Natural killer cell (primary cell): ENCODE measurements at regions of chr2 and their contacts with region 1.

Region 1: GRCh38 chr2:44167940-44168680 is 565 bp upstream of the PPM1B start:
- DNase-seq: peak; percentile 90 to 99
- ATAC-seq: peak; percentile 76 to 92 (median 79)
- H3K4me3 ChIP-seq: peak overlapping the region; percentile 68
- H3K4me3 Mint-ChIP-seq: peak overlapping the region; percentile 97
- H3K27ac ChIP-seq: peak overlapping the region; percentile 93
- H3K27ac Mint-ChIP-seq: peak overlapping the region; percentile 90 to 96
- H3K4me1 ChIP-seq: peaks cover 12% of the 10 kb centered on the region
- H3K4me1 Mint-ChIP-seq: peaks cover 34 to 42% of the 10 kb centered on the region in 2 donors
- H3K27me3 ChIP-seq: no peaks in the 10 kb centered on the region
- H3K27me3 Mint-ChIP-seq: no peaks in the 10 kb centered on the region
- CTCF ChIP-seq: no peak

Region 2: GRCh38 chr2:42810121-42810970 is 1357.8 kb before region 1 on chr2:
- intact Hi-C with region 1: loop called (anchors 5 kb)
- DNase-seq: peak; percentile 98 to 99
- ATAC-seq: peak; percentile 78 to 92 (median 83)
- H3K4me3 ChIP-seq: peak overlapping the region; percentile 80
- H3K4me3 Mint-ChIP-seq: peak overlapping the region; percentile 96
- H3K27ac ChIP-seq: peak overlapping the region; percentile 95
- H3K27ac Mint-ChIP-seq: peak overlapping the region; percentile 98 to 99
- H3K4me1 ChIP-seq: peaks cover 21% of the 10 kb centered on the region
- H3K4me1 Mint-ChIP-seq: peaks cover 28 to 30% of the 10 kb centered on the region in 2 donors
- H3K27me3 ChIP-seq: no peaks in the 10 kb centered on the region
- H3K27me3 Mint-ChIP-seq: peaks cover 3 to 5% of the 10 kb centered on the region in 2 donors
- CTCF ChIP-seq: peak; percentile 7

Region 3: DNA sequence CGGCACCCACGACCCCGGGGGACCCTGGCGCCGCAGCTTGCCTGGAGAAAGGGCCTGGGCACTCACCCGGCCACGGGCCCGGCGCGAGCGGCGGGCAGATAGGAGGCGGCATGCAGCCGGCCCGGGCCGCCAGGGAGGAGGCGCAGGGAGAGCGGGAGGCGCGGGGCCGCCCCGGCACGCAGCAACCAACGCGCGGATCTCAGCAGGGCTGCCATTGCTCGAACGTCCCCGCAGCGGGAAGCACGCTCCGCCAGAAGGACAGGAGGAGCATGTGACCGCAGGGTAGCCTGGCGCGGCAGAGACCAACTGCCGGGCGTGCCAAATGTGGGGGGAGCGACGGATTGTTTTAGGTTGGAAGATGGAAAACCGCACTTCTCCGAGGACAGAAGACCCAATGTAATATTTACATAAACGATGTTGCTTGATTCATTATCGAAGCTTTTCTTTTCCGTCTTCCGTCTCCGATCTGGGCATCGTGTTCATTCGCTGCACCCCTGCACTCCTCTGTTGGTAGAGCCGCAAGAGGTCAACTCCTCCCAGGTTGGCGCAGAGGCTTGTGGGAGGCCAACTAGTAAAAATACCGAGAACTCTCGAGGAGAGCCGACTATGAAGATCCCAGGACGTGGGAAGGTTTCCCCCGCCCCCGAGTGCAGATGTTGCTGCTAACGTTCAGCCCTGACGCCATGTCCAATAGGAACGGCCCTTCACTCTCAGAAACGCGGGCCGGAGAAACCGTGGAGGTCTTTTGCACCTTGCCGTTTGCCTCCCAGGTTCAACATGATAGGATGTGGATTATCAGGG is 172.2 kb before region 1 on chr2 and contains the start of gene LRPPRC:
- intact Hi-C with region 1: loop called (anchors 1 kb)
- DNase-seq: peak; percentile 78 to 96
- ATAC-seq: peak; percentile 94 to 98 (median 95)
- H3K4me3 ChIP-seq: peak within 1 kb of the TSS; percentile 94
- H3K4me3 Mint-ChIP-seq: peak within 1 kb of the TSS; percentile 91
- H3K27ac ChIP-seq: peak within 1 kb of the TSS; percentile 89
- H3K27ac Mint-ChIP-seq: peak within 1 kb of the TSS; percentile 93 to 97
- H3K4me1 ChIP-seq: peaks cover 21% of the 10 kb centered on the region
- H3K4me1 Mint-ChIP-seq: peaks cover 44 to 52% of the 10 kb centered on the region in 2 donors
- H3K27me3 ChIP-seq: no peaks in the 10 kb centered on the region
- H3K27me3 Mint-ChIP-seq: peaks cover 0 to 3% of the 10 kb centered on the region in 2 donors
- CTCF ChIP-seq: no peak
- total RNA-seq, gene LRPPRC: 43.5 to 53.8 (median 48.4) TPM

Region 4: GRCh38 chr2:44184106-44184505 is 16.0 kb after region 1 on chr2:
- intact Hi-C with region 1: loop called (anchors 1 kb)
- DNase-seq: peak in 1 of 2 donors; percentile 62
- ATAC-seq: peak; percentile 95 to 97 (median 96)
- H3K4me3 ChIP-seq: no peak overlapping the region
- H3K4me3 Mint-ChIP-seq: peak overlapping the region; percentile 66
- H3K27ac ChIP-seq: peak overlapping the region; percentile 82
- H3K27ac Mint-ChIP-seq: peak overlapping the region; percentile 90 to 94
- H3K4me1 ChIP-seq: peaks cover 22% of the 10 kb centered on the region
- H3K4me1 Mint-ChIP-seq: peaks cover 77 to 84% of the 10 kb centered on the region in 2 donors
- H3K27me3 ChIP-seq: no peaks in the 10 kb centered on the region
- H3K27me3 Mint-ChIP-seq: no peaks in the 10 kb centered on the region
- CTCF ChIP-seq: no peak

Region 5: DNA sequence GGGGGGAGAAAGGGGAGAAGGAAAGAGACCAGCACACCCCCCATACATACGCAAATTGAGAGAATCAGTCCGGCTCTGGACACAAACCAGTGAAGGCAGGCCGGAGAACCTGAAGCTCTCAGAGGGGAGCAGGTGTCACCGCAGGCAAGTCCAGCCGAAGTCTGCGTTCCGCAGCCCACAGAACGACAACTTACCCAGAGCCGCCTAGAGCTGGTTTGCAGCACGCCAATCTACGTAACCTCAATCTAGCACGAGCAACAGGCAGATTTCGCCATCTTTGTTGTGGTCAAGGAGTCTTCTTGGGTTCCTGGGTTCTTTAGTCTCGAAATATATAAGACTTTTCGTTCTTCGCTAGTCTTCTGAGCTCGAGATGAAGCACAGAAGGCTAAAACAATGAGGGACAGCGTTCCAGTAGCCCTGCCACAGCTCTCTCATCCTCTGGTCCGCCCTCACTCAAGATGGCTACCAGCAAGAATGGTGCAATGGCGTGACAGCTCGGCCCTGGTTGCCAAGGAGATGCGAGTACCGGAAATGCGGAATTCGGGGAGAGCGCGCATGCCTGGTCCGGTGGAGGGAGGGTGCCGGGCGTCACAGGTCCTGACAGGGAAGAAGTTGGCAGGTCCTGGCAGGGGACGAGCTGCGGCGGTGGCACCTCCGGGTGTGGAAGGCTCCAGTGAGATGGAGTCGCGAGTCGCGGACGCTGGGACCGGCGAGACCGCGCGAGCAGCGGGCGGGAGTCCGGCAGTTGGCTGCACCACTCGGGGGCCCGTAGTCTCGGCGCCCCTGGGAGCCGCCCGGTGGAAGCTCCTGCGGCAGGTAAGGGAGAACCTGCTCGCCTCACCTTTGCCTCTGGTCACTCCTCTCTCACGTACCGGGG is 193.5 kb after region 1 on chr2 and contains the starts of genes CAMKMT and PREPL:
- intact Hi-C with region 1: loop called (anchors 1 kb)
- DNase-seq: peak; percentile 96 to 99
- ATAC-seq: peak; percentile 88 to 95 (median 90)
- H3K4me3 ChIP-seq: peak within 1 kb of the TSS; percentile 75
- H3K4me3 Mint-ChIP-seq: peak within 1 kb of the TSS; percentile 99
- H3K27ac ChIP-seq: peak within 1 kb of the TSS; percentile 91
- H3K27ac Mint-ChIP-seq: peak within 1 kb of the TSS; percentile 95 to 99
- H3K4me1 ChIP-seq: peaks cover 7% of the 10 kb centered on the region
- H3K4me1 Mint-ChIP-seq: peaks cover 32 to 47% of the 10 kb centered on the region in 2 donors
- H3K27me3 ChIP-seq: no peaks in the 10 kb centered on the region
- H3K27me3 Mint-ChIP-seq: no peaks in the 10 kb centered on the region
- CTCF ChIP-seq: no peak
- total RNA-seq, gene CAMKMT: 18.1 to 25.0 (median 20.6) TPM
- total RNA-seq, gene PREPL: 17.2 to 23.2 (median 18.4) TPM

Region 6: GRCh38 chr2:44441200-44441599 is 273.1 kb after region 1 on chr2:
- intact Hi-C with region 1: no loop called
- DNase-seq: no peak
- ATAC-seq: no peak
- H3K4me3 ChIP-seq: no peak overlapping the region
- H3K4me3 Mint-ChIP-seq: no peak overlapping the region
- H3K27ac ChIP-seq: no peak overlapping the region
- H3K27ac Mint-ChIP-seq: no peak overlapping the region
- H3K4me1 ChIP-seq: no peaks in the 10 kb centered on the region
- H3K4me1 Mint-ChIP-seq: peaks cover 4 to 14% of the 10 kb centered on the region in 2 donors
- H3K27me3 ChIP-seq: no peaks in the 10 kb centered on the region
- H3K27me3 Mint-ChIP-seq: no peaks in the 10 kb centered on the region
- CTCF ChIP-seq: no peak